ENCODE measurements at regions of chr2 and their contacts with region 1.

Region 1: GRCh38 chr2:27409321-27410073 is at the start of gene PPM1G:
- DNase-seq: peak; percentile 91
- ATAC-seq: peak; percentile 94
- H3K4me3 ChIP-seq: peak within 1 kb of the TSS; percentile 86 to 99 (median 93)
- H3K27ac ChIP-seq: peak within 1 kb of the TSS; percentile 95
- H3K4me1 ChIP-seq: peaks cover 75% of the 10 kb centered on the region
- H3K27me3 ChIP-seq: no peaks in the 10 kb centered on the region; a peak in 1 of 5 replicates
- CTCF ChIP-seq: peak; percentile 27
- EP300 ChIP-seq: peak in 1 of 2 experiments; percentile 25; a peak in 1 of 4 replicates
- POLR2A ChIP-seq: peak; percentile 98 to 99
- RAD21 ChIP-seq: peak; percentile 57
- total RNA-seq, gene PPM1G: 211 and 213 TPM in 2 replicates

Region 2: GRCh38 chr2:27370026-27370815 is 39.3 kb before region 1 on chr2 and contains the starts of genes EIF2B4 and SNX17:
- CTCF ChIA-PET with region 1: no interaction called
- POLR2A ChIA-PET with region 1: interaction called, 21 read pairs
- in situ Hi-C with region 1: no loop called
- intact Hi-C with region 1: no loop called
- DNase-seq: peak; percentile 99
- ATAC-seq: peak; percentile 89
- H3K4me3 ChIP-seq: peak within 1 kb of the TSS; percentile 88 to 96 (median 95)
- H3K27ac ChIP-seq: peak within 1 kb of the TSS; percentile 83
- H3K4me1 ChIP-seq: peaks cover 41% of the 10 kb centered on the region
- H3K27me3 ChIP-seq: no peaks in the 10 kb centered on the region; a peak in 1 of 5 replicates
- CTCF ChIP-seq: peak; percentile 100
- EP300 ChIP-seq: peak; percentile 53 to 68
- POLR2A ChIP-seq: peak in 1 of 2 experiments; percentile 92; a peak in 2 of 4 replicates
- RAD21 ChIP-seq: peak; percentile 97
- total RNA-seq, gene EIF2B4: 91.5 and 105 TPM in 2 replicates
- total RNA-seq, gene SNX17: 94.9 and 109 TPM in 2 replicates

Region 3: GRCh38 chr2:27421028-27421427 is 11.5 kb after region 1 on chr2:
- CTCF ChIA-PET with region 1: no interaction called
- POLR2A ChIA-PET with region 1: interaction called, 19 read pairs
- in situ Hi-C with region 1: no loop called
- intact Hi-C with region 1: no loop called
- DNase-seq: no peak
- ATAC-seq: no peak
- H3K4me3 ChIP-seq: no peak overlapping the region
- H3K27ac ChIP-seq: no peak overlapping the region
- H3K4me1 ChIP-seq: peaks cover 38% of the 10 kb centered on the region
- H3K27me3 ChIP-seq: no peaks in the 10 kb centered on the region
- CTCF ChIP-seq: no peak
- EP300 ChIP-seq: no peak
- POLR2A ChIP-seq: no peak
- RAD21 ChIP-seq: no peak

Region 4: DNA sequence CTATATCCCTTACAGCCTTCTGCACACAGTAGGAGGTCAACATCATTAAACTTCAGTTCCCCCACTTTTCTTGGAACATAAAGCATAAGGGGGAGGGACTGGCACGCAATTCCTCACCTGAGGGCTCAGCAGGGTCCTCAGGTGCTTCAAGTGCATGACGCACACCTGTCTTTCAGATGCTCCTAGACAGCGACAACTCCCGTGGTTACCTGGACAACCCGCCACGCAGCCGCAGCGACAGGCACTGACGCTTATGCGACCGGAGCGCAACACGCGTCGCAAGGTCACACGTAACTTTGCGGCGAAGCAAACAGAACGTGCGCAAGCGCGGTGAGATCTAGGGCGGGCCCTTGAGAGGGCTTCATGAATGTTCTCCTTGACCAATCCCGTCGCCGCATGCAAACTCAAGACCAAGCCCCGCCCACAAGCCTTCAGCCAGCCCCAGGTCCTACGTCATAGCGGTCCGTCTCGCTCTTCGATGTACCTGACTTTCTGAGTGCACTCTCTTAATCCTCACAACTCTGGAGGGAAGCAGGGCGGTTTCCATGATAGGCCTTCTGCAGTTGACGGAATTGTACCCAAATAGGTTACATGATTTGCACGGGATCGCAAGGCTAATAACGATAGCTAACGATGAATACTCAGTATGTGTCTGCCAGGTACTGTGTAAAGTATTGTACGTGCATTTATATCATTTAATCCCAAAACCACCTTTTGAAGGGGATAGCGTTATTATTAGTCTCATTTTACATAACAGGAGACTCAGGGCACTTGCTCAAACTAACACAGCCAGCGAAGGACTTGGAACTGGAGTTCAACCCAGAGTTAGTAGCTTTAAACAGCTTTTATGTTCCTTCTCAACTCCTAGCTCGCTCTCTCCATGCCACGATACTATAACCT is 80.3 kb after region 1 on chr2 and contains the start of gene IFT172:
- CTCF ChIA-PET with region 1: no interaction called
- POLR2A ChIA-PET with region 1: interaction called, 9 read pairs
- in situ Hi-C with region 1: no loop called
- intact Hi-C with region 1: loop called (anchors 2 kb)
- DNase-seq: peak; percentile 100
- ATAC-seq: peak; percentile 91
- H3K4me3 ChIP-seq: peak within 1 kb of the TSS; percentile 69 to 79 (median 78)
- H3K27ac ChIP-seq: peak within 1 kb of the TSS; percentile 54
- H3K4me1 ChIP-seq: peaks cover 41% of the 10 kb centered on the region
- H3K27me3 ChIP-seq: no peaks in the 10 kb centered on the region; a peak in 1 of 5 replicates
- CTCF ChIP-seq: no peak
- EP300 ChIP-seq: no peak
- POLR2A ChIP-seq: peak; percentile 83 to 87
- RAD21 ChIP-seq: no peak; the same call in 1 of the 2 replicates
- total RNA-seq, gene IFT172: 17.0 and 21.6 TPM in 2 replicates

Region 5: DNA sequence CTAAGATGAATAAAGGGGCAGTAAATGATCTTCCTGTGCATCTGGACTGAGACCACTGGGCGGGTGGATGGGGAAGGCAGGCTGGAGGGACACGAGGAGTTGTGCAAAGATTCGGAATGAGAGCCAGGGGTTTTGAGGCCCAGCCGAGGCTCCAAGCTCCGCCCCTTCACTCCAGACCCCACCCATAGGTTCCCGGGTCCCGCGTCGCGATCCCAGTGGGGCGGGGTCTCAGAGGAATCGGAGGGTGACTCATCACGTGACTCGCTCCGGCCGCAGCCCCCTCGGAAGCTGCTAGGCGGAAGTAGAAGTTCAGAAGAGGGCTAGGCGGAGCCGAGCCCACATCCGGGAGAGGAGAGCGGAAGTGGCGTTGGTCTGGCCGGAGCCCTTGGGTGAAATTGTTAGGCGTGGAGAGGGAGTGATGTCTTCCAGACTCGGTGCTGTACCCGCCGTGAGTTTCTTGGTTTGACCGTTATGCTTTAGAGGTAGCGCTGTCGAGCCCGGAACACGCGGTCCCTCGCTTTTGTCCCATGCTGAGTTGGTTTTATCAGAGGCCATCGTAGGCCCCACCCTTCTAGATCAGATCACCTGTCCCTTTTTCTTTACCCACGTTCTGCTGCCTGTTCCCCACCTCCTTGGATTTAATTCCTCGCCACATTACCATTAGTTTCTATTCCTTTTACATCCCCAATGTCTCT is 173.3 kb after region 1 on chr2 and contains the start of gene ZNF512:
- CTCF ChIA-PET with region 1: no interaction called
- POLR2A ChIA-PET with region 1: interaction called, 13 read pairs
- in situ Hi-C with region 1: no loop called
- intact Hi-C with region 1: no loop called
- DNase-seq: peak; percentile 96
- ATAC-seq: peak; percentile 98
- H3K4me3 ChIP-seq: peak within 1 kb of the TSS; percentile 69 to 97 (median 87)
- H3K27ac ChIP-seq: peak within 1 kb of the TSS; percentile 57
- H3K4me1 ChIP-seq: peaks cover 50% of the 10 kb centered on the region
- H3K27me3 ChIP-seq: no peaks in the 10 kb centered on the region; a peak in 1 of 5 replicates
- CTCF ChIP-seq: peak; percentile 25; the same call in 1 of the 2 replicates
- EP300 ChIP-seq: no peak; a peak in 1 of 4 replicates
- POLR2A ChIP-seq: peak; percentile 87 to 88
- RAD21 ChIP-seq: 0 out of 2 replicates have a peak, but pooled peaks have one; percentile 41
- total RNA-seq, gene ZNF512: 31.0 and 38.1 TPM in 2 replicates

Region 6: DNA sequence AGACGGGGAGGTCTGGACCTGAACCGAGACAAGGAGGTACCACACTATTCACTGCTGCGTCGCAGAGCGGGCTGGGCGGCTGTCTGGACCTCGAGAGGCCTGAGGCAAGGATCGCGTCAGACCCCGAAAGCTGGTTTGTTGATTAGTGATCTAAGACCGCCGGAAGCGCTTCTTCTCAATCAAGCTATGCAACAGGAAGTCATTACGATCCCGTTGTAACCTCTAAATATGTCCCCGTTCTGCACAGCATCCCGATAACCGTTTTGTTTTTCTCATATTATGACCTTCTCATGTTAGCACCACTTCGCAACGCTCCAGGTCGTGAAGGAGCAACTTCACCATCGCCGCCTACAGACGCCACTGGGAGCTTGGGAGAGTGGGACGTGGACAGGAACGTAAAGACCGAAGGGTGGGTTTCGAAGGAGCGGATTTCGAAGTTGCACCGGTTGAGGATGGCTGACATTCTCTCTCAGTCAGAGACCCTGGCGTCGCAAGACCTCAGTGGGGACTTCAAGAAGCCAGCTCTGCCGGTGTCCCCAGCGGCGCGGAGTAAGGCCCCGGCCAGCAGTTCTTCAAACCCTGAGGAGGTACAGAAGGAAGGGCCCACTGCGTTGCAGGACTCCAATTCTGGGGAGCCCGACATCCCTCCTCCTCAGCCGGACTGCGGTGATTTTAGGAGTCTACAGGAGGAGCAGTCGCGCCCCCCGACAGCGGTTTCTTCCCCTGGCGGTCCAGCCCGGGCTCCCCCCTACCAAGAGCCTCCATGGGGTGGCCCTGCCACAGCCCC is 254.2 kb after region 1 on chr2 and contains the starts of genes SLC4A1AP and SUPT7L:
- CTCF ChIA-PET with region 1: no interaction called
- POLR2A ChIA-PET with region 1: interaction called, 26 read pairs
- in situ Hi-C with region 1: no loop called
- intact Hi-C with region 1: loop called (anchors 5 kb)
- DNase-seq: peak; percentile 88
- ATAC-seq: peak; percentile 86
- H3K4me3 ChIP-seq: peak within 1 kb of the TSS; percentile 81 to 94 (median 84)
- H3K27ac ChIP-seq: peak within 1 kb of the TSS; percentile 83
- H3K4me1 ChIP-seq: peaks cover 28% of the 10 kb centered on the region
- H3K27me3 ChIP-seq: no peaks in the 10 kb centered on the region; a peak in 1 of 5 replicates
- CTCF ChIP-seq: peak; percentile 29
- EP300 ChIP-seq: no peak
- POLR2A ChIP-seq: peak; percentile 79 to 81
- RAD21 ChIP-seq: no peak
- total RNA-seq, gene SLC4A1AP: 44.6 and 59.0 TPM in 2 replicates
- total RNA-seq, gene SUPT7L: 28.7 and 32.9 TPM in 2 replicates

Region 7: DNA sequence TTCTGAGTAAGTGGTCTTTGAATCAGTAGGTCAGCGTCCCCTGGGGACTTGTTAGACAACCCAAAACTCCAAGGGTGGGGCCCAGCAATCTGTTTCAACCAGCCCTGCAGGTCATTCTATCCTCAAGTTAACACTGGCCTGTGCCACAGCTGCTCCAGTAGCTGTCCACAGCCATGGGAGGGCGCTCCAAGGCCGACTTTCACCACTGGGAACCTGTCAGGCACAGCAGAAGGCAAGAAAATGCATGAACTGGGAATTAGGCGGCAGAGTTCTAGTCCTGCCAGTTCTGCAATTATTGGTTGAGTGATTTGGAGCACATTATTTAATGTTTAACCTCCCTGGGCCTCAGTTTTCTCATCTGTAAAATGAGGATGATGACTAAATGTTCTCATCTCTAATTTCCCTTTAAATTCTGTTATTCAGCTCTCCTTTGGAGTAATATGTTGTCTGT is 344.7 kb after region 1 on chr2:
- CTCF ChIA-PET with region 1: no interaction called
- POLR2A ChIA-PET with region 1: no interaction called
- in situ Hi-C with region 1: no loop called
- intact Hi-C with region 1: no loop called
- DNase-seq: peak; percentile 79
- ATAC-seq: peak; percentile 86
- H3K4me3 ChIP-seq: peak overlapping the region; percentile 82 to 90 (median 89)
- H3K27ac ChIP-seq: no peak overlapping the region
- H3K4me1 ChIP-seq: peaks cover 62% of the 10 kb centered on the region
- H3K27me3 ChIP-seq: no peaks in the 10 kb centered on the region
- CTCF ChIP-seq: peak; percentile 99
- EP300 ChIP-seq: peak in 1 of 2 experiments; percentile 39; a peak in 2 of 4 replicates
- POLR2A ChIP-seq: no peak
- RAD21 ChIP-seq: peak; percentile 98

Region 8: GRCh38 chr2:28080911-28081310 is 671.4 kb after region 1 on chr2:
- CTCF ChIA-PET with region 1: no interaction called
- POLR2A ChIA-PET with region 1: no interaction called
- in situ Hi-C with region 1: no loop called
- intact Hi-C with region 1: no loop called
- DNase-seq: no peak
- ATAC-seq: no peak
- H3K4me3 ChIP-seq: no peak overlapping the region
- H3K27ac ChIP-seq: no peak overlapping the region
- H3K4me1 ChIP-seq: no peaks in the 10 kb centered on the region
- H3K27me3 ChIP-seq: no peaks in the 10 kb centered on the region
- CTCF ChIP-seq: no peak
- EP300 ChIP-seq: no peak
- POLR2A ChIP-seq: no peak
- RAD21 ChIP-seq: no peak